SK-N-SH (cell line): ENCODE measurements at regions of chr17 and their contacts with region 1.

Region 1: DNA sequence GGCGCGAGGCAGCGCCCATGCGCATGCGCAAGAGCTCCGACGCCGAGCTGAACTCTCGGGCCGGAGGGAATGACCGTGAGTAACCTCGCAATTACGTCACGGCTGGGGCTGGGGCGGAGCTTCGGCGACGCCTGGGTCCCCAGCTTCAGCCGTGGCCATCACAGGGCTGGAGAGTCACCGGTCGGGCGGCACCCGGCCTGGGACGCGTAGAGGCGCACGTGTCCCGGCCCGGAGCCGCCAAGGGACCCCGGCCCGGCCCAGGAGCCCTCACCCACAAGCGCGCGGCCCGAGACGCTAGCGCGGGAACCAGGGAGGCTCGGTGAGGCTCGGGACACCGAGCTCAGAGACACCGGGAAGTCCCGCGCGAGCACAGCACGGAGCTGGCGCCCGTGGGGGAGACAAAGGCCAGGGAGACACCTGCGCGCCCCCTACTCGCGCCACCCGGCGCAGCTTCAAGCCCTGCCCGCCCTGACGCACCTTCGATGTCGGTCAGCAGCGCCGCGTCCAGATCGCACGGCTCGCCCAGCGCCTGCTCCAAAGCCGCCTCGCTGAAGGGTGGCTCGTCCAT is 452 bp downstream of the SREBF1 start:
- DNase-seq: peak; percentile 96
- H3K4me3 ChIP-seq: peak overlapping the region; percentile 75 to 79
- H3K27ac ChIP-seq: peak overlapping the region; percentile 69 to 95
- H3K4me1 ChIP-seq: peaks cover 22 to 63% of the 10 kb centered on the region in 2 experiments; a peak in 3 of 4 replicates
- H3K27me3 ChIP-seq: no peaks in the 10 kb centered on the region
- CTCF ChIP-seq: no peak
- EP300 ChIP-seq: no peak; a peak in 1 of 4 replicates
- RAD21 ChIP-seq: peak; percentile 11

Region 2: DNA sequence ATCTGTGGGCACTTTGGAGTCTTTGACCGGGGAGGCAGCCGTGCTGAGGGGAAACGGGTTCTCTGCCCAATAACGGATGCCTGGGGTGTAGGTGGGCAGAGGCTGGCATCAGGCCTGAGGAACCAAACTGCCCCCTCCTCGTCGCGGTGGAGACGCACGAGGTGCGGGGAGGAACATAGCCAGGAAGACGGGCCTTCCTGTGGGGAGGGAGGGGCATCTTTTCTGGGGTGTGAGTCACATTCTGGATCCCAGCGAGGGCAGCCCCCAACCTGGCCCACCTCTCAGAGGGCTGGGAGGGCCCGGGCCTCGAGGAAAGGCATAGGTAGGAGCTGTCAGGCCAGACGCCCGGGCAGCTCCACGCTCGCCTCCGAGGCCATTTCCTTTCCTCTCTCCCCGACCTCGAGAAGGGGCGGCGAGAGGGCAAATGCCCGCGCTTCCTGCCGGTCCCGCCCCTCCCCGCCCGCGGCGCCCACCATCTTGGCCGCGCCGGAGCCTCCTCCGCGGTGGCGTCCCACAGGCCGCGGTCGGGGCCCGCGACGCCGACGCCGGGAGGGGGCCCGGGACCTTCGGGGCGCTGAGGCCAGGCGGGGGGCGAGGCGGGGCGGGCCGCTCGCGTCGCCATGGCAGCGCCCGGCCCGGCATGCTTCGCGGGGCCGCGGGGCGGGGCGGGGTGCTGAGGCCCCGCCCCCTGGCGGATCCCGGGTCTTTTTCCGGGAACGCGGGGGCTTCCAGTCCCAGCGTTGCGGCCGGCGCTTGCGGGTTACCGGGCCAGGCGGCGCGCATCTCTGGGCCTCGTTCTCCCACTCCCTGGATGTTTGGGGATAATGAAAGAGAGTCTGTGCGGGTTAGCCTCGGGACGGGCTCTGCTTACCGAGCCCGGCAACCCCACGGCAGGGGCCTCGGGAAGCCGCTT is 141.9 kb before region 1 on chr17:
- CTCF ChIA-PET with region 1: interaction called, 4 read pairs
- POLR2A ChIA-PET with region 1: interaction called, 11 read pairs
- DNase-seq: peak; percentile 95
- H3K4me3 ChIP-seq: peak overlapping the region; percentile 68 to 79
- H3K27ac ChIP-seq: peak overlapping the region; percentile 95 to 99
- H3K4me1 ChIP-seq: peaks cover 65 to 85% of the 10 kb centered on the region in 2 experiments
- H3K27me3 ChIP-seq: no peaks in the 10 kb centered on the region
- CTCF ChIP-seq: no peak
- EP300 ChIP-seq: no peak
- RAD21 ChIP-seq: no peak

Region 3: GRCh38 chr17:17792551-17793377 is 43.6 kb before region 1 on chr17:
- CTCF ChIA-PET with region 1: interaction called, 4 read pairs
- POLR2A ChIA-PET with region 1: interaction called, 14 read pairs
- DNase-seq: peak; percentile 84
- H3K4me3 ChIP-seq: no peak overlapping the region
- H3K27ac ChIP-seq: peak overlapping the region in 1 of 2 experiments; percentile 96; a peak in 2 of 4 replicates
- H3K4me1 ChIP-seq: peaks cover 33 to 78% of the 10 kb centered on the region in 2 experiments; a peak in 3 of 4 replicates
- H3K27me3 ChIP-seq: no peaks in the 10 kb centered on the region
- CTCF ChIP-seq: no peak
- EP300 ChIP-seq: no peak
- RAD21 ChIP-seq: peak; percentile 3; the same call in 1 of the 2 replicates

Region 4: DNA sequence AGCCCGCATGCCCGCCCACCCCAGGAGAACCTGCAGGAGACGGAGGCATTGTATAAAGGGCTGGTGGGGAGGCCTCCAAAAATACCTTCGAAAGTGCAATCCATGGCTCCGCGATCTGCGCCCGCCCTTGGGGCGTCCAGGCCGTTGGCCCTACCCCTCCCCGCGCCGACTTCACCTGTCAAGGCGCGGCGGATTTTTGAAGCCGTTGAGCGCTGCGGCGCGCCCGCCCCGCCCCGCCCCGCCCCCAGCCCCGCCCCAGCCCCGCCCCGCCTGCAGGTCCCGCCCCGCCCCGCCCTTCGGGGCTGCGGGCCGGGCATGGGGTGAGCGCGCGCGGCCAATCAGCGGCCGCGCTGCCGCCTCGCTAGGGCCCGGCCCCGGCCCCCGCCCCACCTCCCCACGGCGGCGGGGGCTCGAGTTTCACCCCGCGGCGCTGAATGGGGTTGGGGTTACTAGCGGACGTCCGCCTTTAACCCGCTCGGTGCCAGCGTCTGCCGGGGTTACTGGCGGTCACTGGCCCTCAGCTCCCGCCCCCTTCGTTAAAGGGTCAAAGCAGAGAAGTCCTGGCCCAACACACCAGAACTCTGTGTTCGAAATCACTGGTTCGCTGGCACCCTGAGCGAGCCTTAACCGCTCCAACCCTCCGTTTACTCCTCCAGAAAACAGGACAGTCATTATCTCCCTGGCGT is 12.8 kb before region 1 on chr17:
- CTCF ChIA-PET with region 1: interaction called, 3 read pairs
- POLR2A ChIA-PET with region 1: interaction called, 44 read pairs
- DNase-seq: peak; percentile 99
- H3K4me3 ChIP-seq: peak overlapping the region; percentile 49 to 57
- H3K27ac ChIP-seq: peak overlapping the region; percentile 40 to 97
- H3K4me1 ChIP-seq: peaks cover 40 to 94% of the 10 kb centered on the region in 2 experiments
- H3K27me3 ChIP-seq: no peaks in the 10 kb centered on the region
- CTCF ChIP-seq: no peak
- EP300 ChIP-seq: 0 out of 4 replicates have a peak, but pooled peaks of 1 of the 2 experiments have one; percentile 18
- RAD21 ChIP-seq: no peak

Region 5: GRCh38 chr17:17849845-17850373 is 13.6 kb after region 1 on chr17:
- CTCF ChIA-PET with region 1: interaction called, 11 read pairs
- POLR2A ChIA-PET with region 1: interaction called, 34 read pairs
- DNase-seq: peak; percentile 58
- H3K4me3 ChIP-seq: no peak overlapping the region
- H3K27ac ChIP-seq: peak overlapping the region in 1 of 2 experiments; percentile 62; a peak in 1 of 4 replicates
- H3K4me1 ChIP-seq: peaks cover 19 to 83% of the 10 kb centered on the region in 2 experiments; a peak in 3 of 4 replicates
- H3K27me3 ChIP-seq: no peaks in the 10 kb centered on the region
- CTCF ChIP-seq: peak; percentile 29
- EP300 ChIP-seq: no peak
- RAD21 ChIP-seq: no peak

Region 6: DNA sequence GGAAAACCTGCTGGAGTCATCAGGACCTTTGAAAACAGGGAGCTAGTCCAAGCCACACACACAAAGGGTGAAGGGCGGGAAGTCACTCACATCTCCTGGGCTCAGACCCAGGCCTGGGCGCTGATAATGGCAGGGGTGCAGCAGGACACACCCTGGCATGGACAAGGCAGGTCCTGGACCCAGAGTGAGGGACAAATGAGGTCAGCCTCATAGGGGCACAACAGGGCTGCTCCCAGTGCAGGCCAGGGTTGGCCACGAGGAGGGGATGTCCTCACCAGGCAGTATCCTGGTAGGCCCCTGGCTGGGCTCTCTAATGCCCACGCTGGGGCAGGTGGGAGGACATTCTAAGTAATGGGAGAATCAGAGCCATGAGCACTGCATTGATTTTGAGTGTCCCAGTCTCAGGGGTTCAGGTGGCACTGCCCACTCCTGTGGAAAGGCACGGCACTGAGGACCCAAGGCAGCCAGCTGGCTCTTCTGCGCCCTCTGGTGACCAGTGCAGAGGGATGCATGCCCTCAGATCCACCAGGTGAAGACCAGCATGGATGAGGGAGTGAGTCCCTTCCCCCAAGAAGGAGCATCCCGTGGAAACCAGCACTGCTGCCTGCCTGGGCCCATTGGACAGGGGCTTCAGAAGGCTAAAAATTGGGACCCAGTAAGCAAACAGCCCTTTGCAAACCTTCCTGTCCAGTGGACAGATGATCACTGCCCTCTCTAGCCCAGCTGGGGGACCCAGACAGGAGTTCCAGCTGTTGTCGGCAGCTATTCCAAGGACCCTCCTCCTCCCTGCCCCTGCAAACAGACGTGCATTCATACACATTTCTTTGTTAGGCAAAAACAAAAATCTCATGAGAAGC is 23.8 kb after region 1 on chr17:
- CTCF ChIA-PET with region 1: interaction called, 48 read pairs
- POLR2A ChIA-PET with region 1: interaction called, 7 read pairs
- DNase-seq: peak; percentile 84
- H3K4me3 ChIP-seq: no peak overlapping the region; a peak in 1 of 4 replicates
- H3K27ac ChIP-seq: no peak overlapping the region; a peak in 1 of 4 replicates
- H3K4me1 ChIP-seq: peaks cover 0 to 47% of the 10 kb centered on the region in 2 experiments; a peak in 1 of 4 replicates
- H3K27me3 ChIP-seq: no peaks in the 10 kb centered on the region
- CTCF ChIP-seq: peak; percentile 92
- EP300 ChIP-seq: no peak
- RAD21 ChIP-seq: peak; percentile 95

Region 7: GRCh38 chr17:17877529-17878358 is 41.4 kb after region 1 on chr17:
- CTCF ChIA-PET with region 1: interaction called, 3 read pairs
- POLR2A ChIA-PET with region 1: interaction called, 16 read pairs
- DNase-seq: peak; percentile 74
- H3K4me3 ChIP-seq: 0 out of 4 replicates have a peak overlapping the region, but pooled peaks of 1 of the 2 experiments have one; percentile 9
- H3K27ac ChIP-seq: peak overlapping the region; percentile 84 to 99
- H3K4me1 ChIP-seq: peaks cover 15 to 55% of the 10 kb centered on the region in 2 experiments
- H3K27me3 ChIP-seq: no peaks in the 10 kb centered on the region
- CTCF ChIP-seq: 0 out of 2 replicates have a peak, but pooled peaks have one; percentile 21
- EP300 ChIP-seq: no peak; a peak in 1 of 4 replicates
- RAD21 ChIP-seq: peak; percentile 20